ENCODE measurements at regions of chr21 and their contacts with region 1.

Region 1: GRCh38 chr21:31098576-31099005 is 60.3 kb upstream of the KRTAP19-8 start:
- DNase-seq: peak; percentile 44 to 77 (median 62)
- ATAC-seq: peak; percentile 91
- H3K4me3 ChIP-seq: no peak overlapping the region
- H3K4me3 Mint-ChIP-seq: peak overlapping the region in 4 of 10 donors; percentile 15 to 56 (median 46)
- H3K27ac ChIP-seq: no peak overlapping the region
- H3K27ac Mint-ChIP-seq: peak overlapping the region in 1 of 9 donors; percentile 62
- H3K4me1 ChIP-seq: peaks cover 3 to 19% of the 10 kb centered on the region in 2 donors
- H3K4me1 Mint-ChIP-seq: peaks cover 12 to 35% (median 28%) of the 10 kb centered on the region in 7 donors
- H3K27me3 ChIP-seq: no peaks in the 10 kb centered on the region
- H3K27me3 Mint-ChIP-seq: peaks cover 0 to 15% (median 6%) of the 10 kb centered on the region in 5 donors

Region 2: DNA sequence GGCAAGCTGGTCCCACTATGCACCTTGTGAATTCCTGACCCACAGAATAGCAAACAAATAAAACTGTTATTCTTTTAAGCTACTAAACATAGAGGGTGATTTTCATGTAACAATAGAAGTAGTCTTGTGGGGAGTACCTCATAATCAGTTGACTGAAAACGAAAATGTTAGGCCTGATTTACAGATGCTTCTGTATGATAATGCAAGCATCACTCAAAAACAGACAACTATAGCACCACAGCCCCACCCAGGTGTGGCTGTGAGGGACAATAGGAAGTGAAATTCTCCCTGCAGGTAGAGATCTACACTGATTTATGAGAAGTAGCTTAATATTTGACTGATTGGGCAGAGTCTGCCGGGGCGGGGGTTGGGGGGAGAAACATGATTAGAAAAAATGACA is 33.8 kb before region 1 on chr21:
- CTCF ChIA-PET with region 1: no interaction called
- POLR2A ChIA-PET with region 1: no interaction called
- intact Hi-C with region 1: no loop called
- DNase-seq: no peak
- ATAC-seq: no peak
- H3K4me3 ChIP-seq: no peak overlapping the region
- H3K4me3 Mint-ChIP-seq: no peak overlapping the region
- H3K27ac ChIP-seq: no peak overlapping the region
- H3K27ac Mint-ChIP-seq: no peak overlapping the region
- H3K4me1 ChIP-seq: no peaks in the 10 kb centered on the region
- H3K4me1 Mint-ChIP-seq: peaks cover 0 to 6% (median 0%) of the 10 kb centered on the region in 7 donors
- H3K27me3 ChIP-seq: no peaks in the 10 kb centered on the region
- H3K27me3 Mint-ChIP-seq: peaks cover 0 to 17% (median 5%) of the 10 kb centered on the region in 5 donors

Region 3: DNA sequence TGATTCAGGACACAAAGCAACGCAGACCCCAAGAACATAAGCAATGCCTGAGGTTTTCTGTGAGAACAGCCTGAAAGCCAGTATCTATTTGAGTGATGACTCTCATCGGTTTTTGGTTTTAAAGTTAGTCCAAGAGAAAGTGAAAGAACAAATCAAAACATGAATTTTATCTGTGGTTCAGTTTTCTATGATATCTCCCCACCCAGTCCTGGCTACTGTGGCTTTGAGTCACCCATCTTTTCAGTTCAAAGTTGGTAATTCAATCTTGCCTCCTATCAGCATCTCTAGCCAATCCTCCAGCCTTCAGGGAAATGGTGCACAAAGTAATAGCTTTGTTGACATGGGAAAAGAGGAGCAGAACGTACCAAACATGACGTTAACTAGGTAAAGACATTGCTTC is 19.8 kb before region 1 on chr21:
- CTCF ChIA-PET with region 1: no interaction called
- POLR2A ChIA-PET with region 1: no interaction called
- intact Hi-C with region 1: no loop called
- DNase-seq: no peak
- ATAC-seq: no peak
- H3K4me3 ChIP-seq: no peak overlapping the region
- H3K4me3 Mint-ChIP-seq: no peak overlapping the region
- H3K27ac ChIP-seq: no peak overlapping the region
- H3K27ac Mint-ChIP-seq: no peak overlapping the region
- H3K4me1 ChIP-seq: no peaks in the 10 kb centered on the region
- H3K4me1 Mint-ChIP-seq: peaks cover 0 to 10% (median 0%) of the 10 kb centered on the region in 7 donors
- H3K27me3 ChIP-seq: no peaks in the 10 kb centered on the region
- H3K27me3 Mint-ChIP-seq: peaks cover 0 to 10% (median 4%) of the 10 kb centered on the region in 5 donors

Region 4: GRCh38 chr21:31132574-31133242 is 34.1 kb after region 1 on chr21:
- CTCF ChIA-PET with region 1: interaction called, 8 read pairs
- POLR2A ChIA-PET with region 1: interaction called, 4 read pairs
- intact Hi-C with region 1: loop called in 1 of 2 experiments (anchors 2 kb)
- DNase-seq: peak in 8 of 9 donors; percentile 58 to 94 (median 92)
- ATAC-seq: peak; percentile 96
- H3K4me3 ChIP-seq: peak overlapping the region; percentile 59
- H3K4me3 Mint-ChIP-seq: peak overlapping the region; percentile 83 to 91 (median 86)
- H3K27ac ChIP-seq: no peak overlapping the region
- H3K27ac Mint-ChIP-seq: peak overlapping the region; percentile 84 to 96 (median 94)
- H3K4me1 ChIP-seq: peaks cover 25 to 50% of the 10 kb centered on the region in 2 donors
- H3K4me1 Mint-ChIP-seq: peaks cover 41 to 75% (median 69%) of the 10 kb centered on the region in 7 donors
- H3K27me3 ChIP-seq: no peaks in the 10 kb centered on the region
- H3K27me3 Mint-ChIP-seq: no peaks in the 10 kb centered on the region

Region 5: DNA sequence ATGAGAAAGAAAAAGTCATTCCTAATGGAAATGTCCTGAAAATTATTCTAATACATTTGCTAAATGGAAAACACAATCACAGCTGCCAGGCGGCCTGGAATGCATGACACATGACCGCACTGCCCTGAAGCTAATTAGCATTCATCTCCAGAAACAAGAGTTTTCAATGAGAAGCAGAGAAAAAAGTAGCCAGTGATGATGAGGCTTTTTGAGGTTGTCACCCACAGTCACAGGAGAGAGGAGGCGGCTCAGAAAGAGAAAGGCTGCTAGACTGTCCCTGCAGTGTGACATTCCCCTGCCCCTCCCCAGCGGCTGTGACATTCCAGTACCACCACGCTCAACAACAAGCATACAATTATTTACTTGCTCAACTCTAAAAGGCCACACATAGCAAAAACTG is 62.6 kb after region 1 on chr21:
- CTCF ChIA-PET with region 1: interaction called, 10 read pairs
- POLR2A ChIA-PET with region 1: no interaction called
- intact Hi-C with region 1: no loop called
- DNase-seq: peak in 1 of 9 donors; percentile 35
- ATAC-seq: peak; percentile 28
- H3K4me3 ChIP-seq: no peak overlapping the region
- H3K4me3 Mint-ChIP-seq: peak overlapping the region; percentile 14 to 88 (median 77)
- H3K27ac ChIP-seq: peak overlapping the region; percentile 69
- H3K27ac Mint-ChIP-seq: peak overlapping the region; percentile 13 to 99 (median 95)
- H3K4me1 ChIP-seq: peaks cover 0 to 84% of the 10 kb centered on the region in 2 donors
- H3K4me1 Mint-ChIP-seq: peaks cover 52 to 94% (median 92%) of the 10 kb centered on the region in 7 donors
- H3K27me3 ChIP-seq: no peaks in the 10 kb centered on the region
- H3K27me3 Mint-ChIP-seq: no peaks in the 10 kb centered on the region

Region 6: DNA sequence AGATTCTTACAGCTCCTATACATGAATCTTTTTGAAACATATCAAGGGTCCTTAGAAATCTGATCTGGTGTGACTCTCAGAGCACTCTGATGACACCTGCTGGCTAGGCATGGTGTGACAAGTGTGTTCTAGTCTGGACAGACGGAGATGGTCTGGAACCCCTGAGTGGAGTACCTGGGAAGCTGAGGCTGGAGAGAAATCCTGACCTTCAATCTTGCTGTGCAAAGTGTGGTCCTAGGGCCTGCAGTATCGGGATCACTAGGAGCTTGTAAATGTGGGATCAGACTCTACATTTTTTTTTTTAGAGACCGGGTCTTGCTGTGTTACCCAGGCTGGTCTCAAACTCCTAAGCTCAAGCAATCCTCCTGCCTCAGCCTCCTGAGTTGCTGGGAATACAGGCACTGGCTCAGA is 482.3 kb after region 1 on chr21:
- CTCF ChIA-PET with region 1: interaction called, 39 read pairs
- POLR2A ChIA-PET with region 1: no interaction called
- intact Hi-C with region 1: loop called (anchors 1 to 2 kb)
- DNase-seq: peak; percentile 50 to 77 (median 66)
- ATAC-seq: peak; percentile 90
- H3K4me3 ChIP-seq: no peak overlapping the region
- H3K4me3 Mint-ChIP-seq: no peak overlapping the region
- H3K27ac ChIP-seq: no peak overlapping the region
- H3K27ac Mint-ChIP-seq: peak overlapping the region in 3 of 9 donors; percentile 10 to 76 (median 32)
- H3K4me1 ChIP-seq: no peaks in the 10 kb centered on the region
- H3K4me1 Mint-ChIP-seq: peaks cover 0 to 8% (median 4%) of the 10 kb centered on the region in 7 donors
- H3K27me3 ChIP-seq: no peaks in the 10 kb centered on the region
- H3K27me3 Mint-ChIP-seq: peaks cover 0 to 25% (median 0%) of the 10 kb centered on the region in 5 donors